Astrocyte of the cerebellum (primary cell): ENCODE measurements at regions of chr14 and their contacts with region 1.

Region 1: GRCh38 chr14:83271663-83272062 is 1738.0 kb upstream of the SEL1L start:
- DNase-seq: no peak
- H3K4me3 ChIP-seq: no peak overlapping the region
- CTCF ChIP-seq: no peak

Region 2: DNA sequence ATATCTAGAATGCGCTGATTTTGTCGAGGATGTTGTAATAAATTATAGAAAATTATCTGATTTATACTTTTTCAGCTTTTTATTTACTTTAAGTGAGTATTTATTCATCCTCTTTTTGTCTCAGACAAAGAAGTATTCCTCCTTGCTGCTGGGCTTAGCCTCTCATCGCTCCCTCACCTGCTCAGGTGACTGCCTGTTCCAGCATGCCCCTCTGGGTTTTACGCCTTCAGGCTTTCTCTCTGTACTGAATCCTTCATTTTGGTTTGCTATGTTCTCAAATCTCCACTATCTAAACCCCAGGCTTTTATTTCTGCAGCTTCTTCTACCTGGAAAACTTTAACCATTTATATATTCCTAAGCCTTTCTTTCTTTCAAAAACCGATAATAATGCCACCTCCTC is 87.1 kb before region 1 on chr14:
- in situ Hi-C with region 1: loop called (anchors 5 kb)
- DNase-seq: no peak
- H3K4me3 ChIP-seq: no peak overlapping the region
- CTCF ChIP-seq: no peak

Region 3: DNA sequence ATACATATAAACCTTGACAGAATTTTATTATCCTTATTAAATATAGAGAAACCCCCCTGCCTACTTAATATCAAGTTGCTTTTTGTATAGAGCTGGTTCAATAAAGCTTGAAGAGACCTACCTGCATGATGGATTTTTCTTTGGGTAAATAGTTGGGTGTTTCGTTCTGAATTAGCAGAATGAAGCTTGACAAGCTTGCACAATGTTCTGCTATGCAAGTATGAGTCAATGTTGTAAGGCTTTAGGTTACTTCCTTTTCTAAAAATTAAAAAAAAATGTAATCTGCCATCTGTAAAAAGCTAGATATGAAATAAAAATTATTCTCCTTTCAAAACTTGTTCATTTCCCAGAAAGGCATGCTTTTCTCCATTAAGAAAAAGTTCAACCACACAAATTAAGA is 75.4 kb before region 1 on chr14:
- in situ Hi-C with region 1: no loop called
- DNase-seq: no peak
- H3K4me3 ChIP-seq: no peak overlapping the region
- CTCF ChIP-seq: no peak